Activated B cell treated with CpG ODN at 0.5 μM for 24 hours (primary cell): ENCODE measurements at regions of chr4 and their contacts with region 1.

Region 1: DNA sequence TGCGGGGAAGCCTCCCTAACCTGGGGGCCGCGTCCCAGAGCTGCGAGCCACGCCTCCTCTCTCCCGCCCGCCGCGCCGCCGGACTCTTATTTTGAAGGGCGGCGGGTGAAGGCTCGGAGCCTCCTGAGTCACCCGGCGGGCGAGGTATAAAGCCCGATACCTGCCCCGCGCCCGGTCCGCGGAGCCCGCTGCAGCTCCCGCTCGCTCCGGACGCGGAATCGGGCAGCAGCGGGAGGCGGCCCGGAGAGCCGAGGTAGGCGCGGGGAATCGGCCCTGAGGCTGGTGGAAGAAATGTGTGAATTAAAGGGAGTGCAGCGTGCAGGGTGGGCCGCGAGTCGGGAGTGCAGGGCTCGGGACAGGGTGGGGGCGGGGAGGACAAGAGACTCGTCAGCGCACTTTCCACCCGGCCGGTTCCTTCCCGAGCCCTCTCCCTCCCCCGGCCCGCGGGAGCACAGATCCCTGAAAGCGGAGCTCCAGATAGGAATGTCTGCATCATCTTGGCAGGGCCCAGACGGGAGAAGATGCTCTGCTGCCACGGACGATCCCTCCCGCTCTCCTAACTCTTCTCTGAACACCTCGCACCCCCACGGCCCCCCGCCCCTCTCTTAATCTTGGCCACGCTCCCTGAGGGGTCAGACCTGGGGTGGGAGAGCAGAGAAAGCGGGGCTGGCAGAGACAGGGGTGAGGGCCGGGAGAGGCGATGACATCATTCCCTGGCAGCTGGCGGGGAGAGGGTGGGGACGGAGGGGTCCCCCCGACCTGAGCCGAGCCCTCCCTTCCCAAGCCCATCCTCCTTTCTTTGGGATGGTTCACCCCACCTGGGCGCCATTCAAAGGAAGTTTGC is 177.9 kb downstream of the CBR4 start:
- DNase-seq: peak; percentile 54
- ATAC-seq: peak; percentile 89
- H3K4me3 Mint-ChIP-seq: peak overlapping the region; percentile 75
- H3K27ac Mint-ChIP-seq: no peak overlapping the region
- H3K4me1 Mint-ChIP-seq: peaks cover 18% of the 10 kb centered on the region
- H3K27me3 Mint-ChIP-seq: peaks cover 53% of the 10 kb centered on the region
- CTCF ChIP-seq: no peak

Region 2: GRCh38 chr4:168318266-168318895 is 513.8 kb before region 1 on chr4 and contains the start of gene DDX60:
- CTCF ChIA-PET with region 1: no interaction called
- POLR2A ChIA-PET with region 1: no interaction called
- intact Hi-C with region 1: loop called (anchors 2 kb)
- DNase-seq: peak; percentile 68
- ATAC-seq: peak; percentile 92
- H3K4me3 Mint-ChIP-seq: peak within 1 kb of the TSS; percentile 95
- H3K27ac Mint-ChIP-seq: peak within 1 kb of the TSS; percentile 96
- H3K4me1 Mint-ChIP-seq: peaks cover 20% of the 10 kb centered on the region
- H3K27me3 Mint-ChIP-seq: no peaks in the 10 kb centered on the region
- CTCF ChIP-seq: no peak
- total RNA-seq, gene DDX60: 17.6 and 17.9 TPM in 2 replicates

Region 3: DNA sequence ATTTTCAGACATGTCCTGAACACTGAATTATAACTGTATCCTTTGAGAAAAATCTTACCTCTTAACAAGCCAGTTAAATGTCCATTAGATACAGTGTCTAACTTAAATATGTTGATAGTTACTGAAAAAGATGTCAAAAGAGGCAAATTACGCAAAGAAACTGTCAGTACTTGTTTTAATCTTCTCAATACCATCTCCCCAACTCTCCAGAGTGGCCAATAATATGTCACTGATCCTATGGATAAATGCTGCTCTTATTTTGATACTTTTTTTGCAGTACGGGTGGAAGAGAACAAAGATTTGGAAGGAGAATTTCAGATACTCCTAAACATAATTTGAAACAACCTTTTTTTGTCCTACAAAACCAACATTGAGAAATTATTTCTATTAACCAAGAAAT is 14.8 kb before region 1 on chr4:
- CTCF ChIA-PET with region 1: interaction called, 3 read pairs
- POLR2A ChIA-PET with region 1: no interaction called
- intact Hi-C with region 1: loop called (anchors 1 kb)
- DNase-seq: no peak
- ATAC-seq: no peak
- H3K4me3 Mint-ChIP-seq: no peak overlapping the region
- H3K27ac Mint-ChIP-seq: no peak overlapping the region
- H3K4me1 Mint-ChIP-seq: peaks cover 9% of the 10 kb centered on the region
- H3K27me3 Mint-ChIP-seq: peaks cover 28% of the 10 kb centered on the region
- CTCF ChIP-seq: no peak

Region 4: GRCh38 chr4:168877511-168878491 is 45.7 kb after region 1 on chr4:
- CTCF ChIA-PET with region 1: no interaction called
- POLR2A ChIA-PET with region 1: interaction called, 3 read pairs
- intact Hi-C with region 1: loop called (anchors 2 kb)
- DNase-seq: peak; percentile 25
- ATAC-seq: peak; percentile 55
- H3K4me3 Mint-ChIP-seq: peak overlapping the region; percentile 80
- H3K27ac Mint-ChIP-seq: peak overlapping the region; percentile 8
- H3K4me1 Mint-ChIP-seq: peaks cover 28% of the 10 kb centered on the region
- H3K27me3 Mint-ChIP-seq: peaks cover 35% of the 10 kb centered on the region
- CTCF ChIP-seq: no peak